Tibial artery (tissue), 4 donors: ENCODE measurements at regions of chr17 and their contacts with region 1.

Region 1: DNA sequence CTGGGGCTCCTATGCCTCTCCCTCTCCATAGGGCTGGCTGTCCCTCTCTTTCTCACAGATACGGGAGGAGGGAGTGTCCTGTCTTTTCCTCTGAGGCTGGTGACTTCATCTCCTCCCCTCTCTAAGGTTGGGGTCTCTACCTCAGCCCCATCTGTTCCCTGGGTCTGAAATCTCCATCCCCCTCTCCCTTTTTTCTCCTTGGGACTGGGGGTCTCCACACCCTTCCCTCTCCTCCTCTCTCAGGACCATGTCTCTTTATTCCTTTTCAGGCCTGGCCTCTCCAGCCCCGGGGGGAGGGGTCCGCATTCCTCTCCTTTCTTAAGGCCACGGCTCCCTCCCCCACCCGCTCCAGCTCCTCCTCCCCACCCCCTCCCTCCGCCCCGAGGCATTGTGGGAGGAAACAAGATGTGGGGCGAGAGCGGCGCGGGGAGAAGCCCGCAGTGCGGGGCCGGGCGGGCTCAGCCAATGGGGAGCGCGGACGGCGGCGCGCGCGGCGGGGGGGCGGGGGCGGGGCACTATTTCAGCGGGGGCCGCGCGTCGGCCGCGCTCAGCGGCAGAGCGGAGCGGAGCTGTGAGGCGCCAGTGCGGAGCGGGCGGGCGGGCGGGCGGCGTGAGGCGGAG is at the start of gene DYNLL2:
- DNase-seq: peak; percentile 89 to 94
- H3K4me3 ChIP-seq: peak within 1 kb of the TSS; percentile 83 to 96
- H3K27ac ChIP-seq: peak within 1 kb of the TSS; percentile 92 to 96
- H3K4me1 ChIP-seq: peaks cover 0 to 41% (median 32%) of the 10 kb centered on the region in 4 donors
- H3K27me3 ChIP-seq: no peaks in the 10 kb centered on the region
- CTCF ChIP-seq: no peak

Region 2: DNA sequence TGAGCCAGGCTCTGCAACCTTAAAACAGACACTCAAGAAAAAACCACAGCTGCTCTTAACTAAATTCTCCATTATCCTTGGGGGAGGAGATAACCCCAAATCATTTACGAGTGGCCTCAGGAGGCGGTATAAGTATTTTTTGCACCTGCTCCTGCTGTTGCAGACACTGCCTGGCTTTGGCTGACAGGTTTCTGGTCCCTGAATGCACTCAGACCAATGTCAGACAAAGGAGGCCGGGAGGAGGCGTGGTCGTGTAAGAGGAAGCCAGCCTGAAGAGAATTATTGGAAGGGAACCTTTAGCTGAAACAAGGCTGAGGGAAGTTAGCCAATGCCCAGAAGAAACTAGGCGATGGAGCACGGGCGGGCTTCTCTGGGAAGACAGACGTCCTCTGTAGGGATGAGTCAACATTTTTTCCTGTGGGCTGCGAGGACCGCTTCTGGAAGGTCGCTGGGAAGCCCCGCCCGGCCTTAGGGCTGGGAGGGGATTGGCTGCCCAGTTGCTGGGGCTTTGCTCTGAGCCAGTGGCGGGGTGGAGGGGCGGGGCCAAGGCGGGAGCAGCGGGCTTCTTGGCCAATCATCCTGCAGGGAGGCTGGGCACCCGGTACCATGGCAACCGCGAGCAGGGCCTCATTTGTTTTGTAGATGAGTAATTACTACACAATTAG is 420.2 kb before region 1 on chr17:
- intact Hi-C with region 1: no loop called
- DNase-seq: peak; percentile 90 to 96
- H3K4me3 ChIP-seq: peak overlapping the region; percentile 25 to 39
- H3K27ac ChIP-seq: peak overlapping the region; percentile 59 to 64
- H3K4me1 ChIP-seq: peaks cover 0 to 11% (median 7%) of the 10 kb centered on the region in 4 donors
- H3K27me3 ChIP-seq: no peaks in the 10 kb centered on the region
- CTCF ChIP-seq: no peak

Region 3: DNA sequence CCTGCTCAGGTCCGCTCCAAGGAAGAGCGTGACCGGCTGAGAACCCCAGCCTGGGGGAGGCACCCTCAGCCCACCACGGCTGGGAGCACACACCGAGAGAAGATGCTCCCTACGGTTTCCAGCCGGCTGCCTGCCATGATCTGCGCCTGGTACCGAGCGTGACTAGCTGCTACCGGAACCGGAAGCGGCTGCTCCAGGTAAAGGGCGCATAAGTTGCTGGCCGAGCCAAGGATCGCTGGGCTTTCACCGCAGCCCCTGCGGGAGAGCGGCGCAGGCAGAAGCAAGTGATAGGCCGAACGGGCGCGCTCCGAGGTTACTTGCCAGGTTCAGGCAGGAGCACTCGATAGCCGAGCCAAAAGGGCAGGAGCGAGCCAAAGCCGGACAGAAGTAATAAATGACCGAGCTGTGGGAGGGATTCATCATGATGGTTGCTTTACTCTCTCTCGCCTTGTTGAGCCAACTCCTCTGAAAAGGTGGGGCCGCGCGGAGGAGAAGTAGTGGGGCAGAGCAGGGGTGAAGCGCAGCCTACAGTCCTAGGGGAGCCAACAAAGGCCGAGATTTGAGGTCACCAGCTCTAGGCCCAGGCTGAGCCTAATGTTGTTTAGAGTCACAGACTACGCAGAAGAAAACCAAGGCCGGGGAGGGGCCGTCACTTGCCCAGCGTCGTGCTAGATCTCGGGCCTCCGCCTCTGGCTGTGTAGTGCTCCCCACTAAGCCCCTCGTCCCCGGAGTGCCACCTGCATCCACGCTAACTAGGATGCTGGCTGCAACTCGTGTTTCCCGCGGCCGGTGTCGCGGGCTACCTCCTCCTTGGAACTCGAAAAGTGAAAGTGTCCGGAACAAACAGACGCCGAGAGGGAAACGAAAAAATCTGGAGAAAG is 232.9 kb before region 1 on chr17 and contains the start of gene MRPS23:
- intact Hi-C with region 1: loop called (anchors 10 kb)
- DNase-seq: peak; percentile 98 to 99
- H3K4me3 ChIP-seq: peak within 1 kb of the TSS; percentile 79 to 88
- H3K27ac ChIP-seq: peak within 1 kb of the TSS; percentile 85 to 94
- H3K4me1 ChIP-seq: peaks cover 0 to 59% (median 46%) of the 10 kb centered on the region in 4 donors
- H3K27me3 ChIP-seq: no peaks in the 10 kb centered on the region
- CTCF ChIP-seq: no peak

Region 4: GRCh38 chr17:57868007-57868909 is 214.7 kb before region 1 on chr17:
- intact Hi-C with region 1: no loop called
- DNase-seq: peak; percentile 86 to 93
- H3K4me3 ChIP-seq: no peak overlapping the region
- H3K27ac ChIP-seq: peak overlapping the region; percentile 75 to 82
- H3K4me1 ChIP-seq: peaks cover 5 to 37% (median 35%) of the 10 kb centered on the region in 4 donors
- H3K27me3 ChIP-seq: no peaks in the 10 kb centered on the region
- CTCF ChIP-seq: peak; percentile 42 to 53

Region 5: DNA sequence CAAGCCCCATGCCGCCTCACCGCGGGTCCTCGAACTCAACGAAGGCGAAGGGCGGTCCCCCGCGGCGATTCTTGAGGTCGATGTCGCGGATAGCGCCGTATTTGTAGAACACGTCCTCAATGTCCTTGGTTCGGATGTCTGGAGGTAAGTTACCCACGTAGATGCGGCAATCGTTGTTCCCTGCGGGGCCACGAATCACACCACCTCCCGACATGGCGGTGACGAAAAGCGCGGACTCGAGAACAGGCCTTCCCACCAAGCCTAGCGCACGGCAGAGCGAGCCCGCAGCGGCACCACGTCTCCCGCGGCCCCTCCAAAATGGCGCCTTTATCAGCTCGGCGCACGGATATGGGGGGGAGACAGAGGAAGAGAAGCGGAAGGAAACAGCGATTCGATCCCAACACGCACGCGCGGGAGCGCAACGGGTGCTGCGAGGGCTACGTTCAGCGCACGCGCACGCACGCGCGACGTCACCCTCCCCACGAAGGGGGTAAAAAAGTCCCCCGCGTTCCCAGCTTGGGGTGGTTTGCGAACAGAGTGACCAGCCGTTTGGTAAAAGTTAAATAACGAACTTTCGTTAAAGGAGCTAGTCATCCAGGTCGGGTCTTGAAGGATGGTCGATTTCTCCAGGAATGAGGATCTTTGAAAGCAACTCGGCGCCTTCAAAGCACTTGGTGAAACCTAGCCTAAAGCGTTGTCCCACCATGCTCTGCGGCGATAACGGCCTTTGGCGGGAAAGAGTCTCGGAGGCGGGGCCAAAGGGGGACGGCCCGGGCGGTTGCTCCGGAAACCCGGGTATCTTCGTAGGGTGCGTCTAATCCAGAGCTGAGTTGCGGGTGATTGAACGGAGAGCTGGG is 75.8 kb before region 1 on chr17 and contains the start of gene SRSF1:
- intact Hi-C with region 1: loop called (anchors 2 kb)
- DNase-seq: peak; percentile 96 to 98
- H3K4me3 ChIP-seq: peak within 1 kb of the TSS; percentile 87 to 90
- H3K27ac ChIP-seq: peak within 1 kb of the TSS; percentile 97 to 98
- H3K4me1 ChIP-seq: peaks cover 0 to 44% (median 25%) of the 10 kb centered on the region in 4 donors
- H3K27me3 ChIP-seq: no peaks in the 10 kb centered on the region
- CTCF ChIP-seq: no peak

Region 6: DNA sequence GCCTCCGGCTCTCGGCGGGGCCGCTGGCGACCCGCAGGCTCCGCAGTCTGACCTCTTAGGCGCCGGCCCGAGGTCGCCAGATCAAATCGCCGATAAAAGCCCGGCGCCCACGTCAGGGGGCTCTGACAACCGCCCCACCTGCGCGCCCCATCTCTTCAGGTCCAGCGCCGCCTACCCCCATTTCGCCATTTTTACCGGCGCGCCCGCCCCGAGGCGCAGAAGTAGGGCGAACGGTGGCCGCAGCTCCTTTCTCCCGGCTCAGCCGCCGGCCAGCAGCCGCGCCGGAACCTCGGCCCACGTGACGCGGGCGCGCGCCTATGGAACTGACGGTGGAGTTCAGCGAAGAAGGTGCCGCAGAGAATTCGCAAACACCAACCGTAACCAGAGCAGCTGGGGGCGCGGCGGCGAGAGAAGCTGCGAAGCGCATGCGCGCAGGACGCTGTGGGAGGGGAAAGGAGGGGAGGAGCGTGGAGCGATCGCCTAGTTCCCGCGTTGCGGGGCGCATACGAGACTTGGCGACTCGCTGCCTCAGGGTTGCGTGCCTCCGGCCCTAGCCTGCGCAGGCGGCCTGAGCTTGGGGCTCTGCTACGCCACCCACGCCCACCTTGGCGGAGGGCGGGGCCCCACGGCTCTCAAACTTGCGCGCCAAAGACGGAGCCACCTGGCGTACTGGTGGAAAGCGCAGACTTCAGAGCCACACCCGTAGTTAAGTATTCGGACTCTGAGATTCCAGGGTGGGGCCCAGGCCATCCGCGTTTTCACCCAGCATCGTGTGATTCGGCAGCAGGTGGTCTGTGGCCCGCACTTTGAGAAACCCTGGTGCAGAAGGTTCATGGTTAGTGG is 1023.7 kb after region 1 on chr17 and contains the start of gene TRIM37:
- intact Hi-C with region 1: loop called (anchors 5 kb)
- DNase-seq: peak; percentile 93 to 98
- H3K4me3 ChIP-seq: peak within 1 kb of the TSS; percentile 74 to 90
- H3K27ac ChIP-seq: peak within 1 kb of the TSS; percentile 93 to 94
- H3K4me1 ChIP-seq: peaks cover 0 to 38% (median 22%) of the 10 kb centered on the region in 4 donors
- H3K27me3 ChIP-seq: no peaks in the 10 kb centered on the region
- CTCF ChIP-seq: peak in 1 of 2 experiments; percentile 9